WTC11 (cell line): ENCODE measurements at regions of chrX and their contacts with region 1.

Region 1: DNA sequence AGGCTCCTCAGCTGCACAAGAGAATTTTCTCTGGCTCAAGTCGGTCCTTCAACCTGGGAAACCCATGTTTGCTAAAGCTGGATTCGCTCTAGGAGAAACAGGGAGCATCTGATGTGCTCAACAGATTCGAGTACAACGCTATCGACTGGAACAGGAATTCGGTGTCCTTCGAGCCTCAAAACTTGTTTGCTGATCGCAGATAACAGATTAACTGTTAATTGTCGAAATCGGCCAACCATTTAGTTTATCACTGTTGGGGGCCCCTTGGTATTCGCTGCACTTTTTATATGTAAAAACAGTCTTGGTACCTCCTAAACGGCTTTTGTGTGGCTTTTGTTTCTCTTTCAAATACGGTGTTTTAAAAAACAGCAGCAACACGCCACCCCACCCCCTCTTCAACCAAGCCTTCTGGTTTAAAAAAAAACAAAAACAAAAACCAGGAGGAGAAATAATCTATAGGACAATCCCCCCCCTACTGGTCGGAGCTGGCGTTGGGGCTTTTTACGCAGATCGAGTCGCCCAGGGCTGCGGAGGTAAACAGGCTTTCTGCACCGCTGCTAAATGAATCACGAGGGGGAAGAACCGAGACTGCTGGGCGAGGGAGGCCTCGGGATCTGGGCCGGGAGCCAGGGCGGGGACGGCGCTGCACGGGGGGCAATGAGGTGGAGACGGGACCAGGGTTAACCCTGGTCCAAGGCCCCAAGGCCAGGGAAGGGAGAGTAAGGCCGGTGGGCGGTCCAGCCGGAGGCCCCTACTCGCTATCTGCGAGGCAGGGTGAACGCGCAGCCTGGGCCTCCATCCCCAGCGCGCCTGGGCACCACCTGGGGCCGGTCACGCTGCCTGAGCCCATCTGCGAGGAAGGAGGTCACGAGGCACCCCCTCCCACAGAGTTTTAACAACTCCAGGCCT is 71.7 kb upstream of the BCOR start:
- DNase-seq: peak; percentile 80
- ATAC-seq: peak; percentile 42
- H3K4me3 Mint-ChIP-seq: peak overlapping the region; percentile 72
- H3K27ac Mint-ChIP-seq: peak overlapping the region; percentile 98
- H3K4me1 Mint-ChIP-seq: peaks cover 58% of the 10 kb centered on the region
- H3K27me3 Mint-ChIP-seq: peaks cover 22% of the 10 kb centered on the region
- CTCF ChIP-seq: no peak

Region 2: GRCh38 chrX:40097497-40098263 is 71.8 kb before region 1 on chrX and contains the start of gene BCOR:
- CTCF ChIA-PET with region 1: interaction called, 12 read pairs
- POLR2A ChIA-PET with region 1: interaction called, 9 read pairs
- DNase-seq: peak; percentile 60
- ATAC-seq: peak; percentile 0; the same call in 1 of the 2 replicates
- H3K4me3 Mint-ChIP-seq: peak within 1 kb of the TSS; percentile 90
- H3K27ac Mint-ChIP-seq: no peak within 1 kb of the TSS
- H3K4me1 Mint-ChIP-seq: peaks cover 28% of the 10 kb centered on the region
- H3K27me3 Mint-ChIP-seq: peaks cover 28% of the 10 kb centered on the region
- CTCF ChIP-seq: no peak
- total RNA-seq, gene BCOR: 41.1 to 44.5 TPM (median 43.1 TPM) in 3 replicates

Region 3: DNA sequence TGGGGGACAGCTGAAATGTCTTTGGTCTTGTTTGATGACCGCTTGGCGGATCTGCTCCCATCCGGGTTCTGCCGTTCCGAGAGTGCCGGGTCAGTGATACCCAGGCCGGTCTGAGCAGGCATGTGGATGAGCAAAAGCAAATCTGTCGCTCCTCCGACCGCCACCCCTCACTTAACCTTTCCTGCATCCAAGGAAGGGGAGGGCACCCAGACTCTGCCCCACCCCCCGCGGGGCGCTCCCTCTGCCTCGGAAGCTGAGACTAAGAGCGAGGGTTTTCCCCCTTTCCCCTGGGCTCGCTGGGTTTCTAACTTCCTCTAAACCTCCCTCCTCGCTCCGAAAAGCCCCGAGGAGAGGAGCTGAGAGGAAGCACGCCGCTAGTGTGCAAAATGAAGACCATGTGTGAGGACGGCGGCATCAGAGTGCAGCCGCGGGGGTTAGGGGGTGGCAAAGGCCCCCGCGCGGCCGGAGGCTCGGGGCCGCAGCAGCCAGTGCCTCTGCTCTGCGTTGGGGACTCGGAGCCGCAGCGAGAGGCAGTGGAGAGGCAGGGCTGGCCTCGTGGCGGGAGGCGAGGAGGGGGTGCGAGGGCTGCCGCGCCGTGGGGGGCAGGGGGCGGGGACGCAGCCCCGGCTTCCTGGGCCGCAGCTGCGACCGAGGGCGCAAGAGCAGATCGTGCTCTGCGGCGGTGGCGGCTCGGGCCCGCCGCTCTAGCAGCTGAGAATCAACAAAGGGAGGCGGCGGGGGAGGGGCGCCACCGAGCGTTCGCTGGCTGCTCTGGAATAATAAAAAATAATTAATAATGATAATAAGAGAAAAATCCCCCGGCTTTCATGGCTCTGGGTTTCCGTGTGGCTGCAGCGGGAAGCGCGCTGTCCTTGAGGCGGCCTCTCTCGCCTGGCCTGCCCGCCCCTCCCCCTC is 15.9 kb before region 1 on chrX:
- CTCF ChIA-PET with region 1: interaction called, 8 read pairs
- POLR2A ChIA-PET with region 1: interaction called, 58 read pairs
- DNase-seq: peak; percentile 26
- ATAC-seq: no peak
- H3K4me3 Mint-ChIP-seq: peak overlapping the region; percentile 63
- H3K27ac Mint-ChIP-seq: no peak overlapping the region
- H3K4me1 Mint-ChIP-seq: peaks cover 33% of the 10 kb centered on the region
- H3K27me3 Mint-ChIP-seq: peaks cover 34% of the 10 kb centered on the region
- CTCF ChIP-seq: no peak

Region 4: GRCh38 chrX:40266490-40267333 is 97.3 kb after region 1 on chrX:
- CTCF ChIA-PET with region 1: interaction called, 10 read pairs
- POLR2A ChIA-PET with region 1: no interaction called
- DNase-seq: peak; percentile 66
- ATAC-seq: peak; percentile 92
- H3K4me3 Mint-ChIP-seq: peak overlapping the region; percentile 58
- H3K27ac Mint-ChIP-seq: no peak overlapping the region
- H3K4me1 Mint-ChIP-seq: peaks cover 12% of the 10 kb centered on the region
- H3K27me3 Mint-ChIP-seq: peaks cover 12% of the 10 kb centered on the region
- CTCF ChIP-seq: no peak